ENCODE measurements at regions of chr1 and their contacts with region 1.

Region 1: DNA sequence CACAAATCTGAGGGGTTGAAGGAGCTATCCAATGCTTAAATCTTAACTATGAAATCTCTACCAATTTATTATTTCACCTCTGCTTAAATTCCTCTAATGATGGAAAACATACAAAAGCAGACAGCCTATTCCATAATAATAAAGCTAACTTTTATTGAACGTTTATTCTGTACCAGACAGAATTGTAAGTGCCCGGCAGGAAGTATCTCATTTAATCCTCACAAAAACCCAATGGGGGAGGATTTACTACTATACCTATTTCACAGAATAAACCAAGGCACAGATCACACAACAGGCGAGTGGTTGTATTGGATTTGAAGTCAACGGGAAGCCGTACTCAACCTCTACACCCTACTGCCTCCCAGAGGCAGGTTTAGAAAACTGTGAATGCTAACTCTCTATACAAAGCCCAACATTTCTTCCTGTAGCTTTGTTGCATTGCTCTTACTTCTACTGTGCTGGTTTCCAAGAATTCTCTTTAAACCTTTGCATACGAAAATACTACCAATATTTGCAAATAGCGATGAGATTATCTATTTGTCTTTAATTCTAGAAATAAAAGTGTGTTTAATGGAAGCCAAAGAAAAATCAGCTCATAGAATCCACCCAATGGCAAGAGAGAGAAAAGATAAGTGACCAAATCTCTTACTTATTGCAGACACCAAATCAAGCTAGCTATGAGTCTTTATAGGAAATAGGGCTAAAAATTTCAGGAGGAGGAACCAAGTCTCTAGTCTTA is 33.5 kb upstream of the C1orf53 start:
- DNase-seq: peak; percentile 45
- ATAC-seq: peak; percentile 93
- H3K4me3 ChIP-seq: no peak overlapping the region
- H3K27ac ChIP-seq: no peak overlapping the region
- H3K4me1 ChIP-seq: no peaks in the 10 kb centered on the region
- H3K27me3 ChIP-seq: no peaks in the 10 kb centered on the region; the same call in 1 of the 2 replicates
- CTCF ChIP-seq: peak; percentile 74

Region 2: DNA sequence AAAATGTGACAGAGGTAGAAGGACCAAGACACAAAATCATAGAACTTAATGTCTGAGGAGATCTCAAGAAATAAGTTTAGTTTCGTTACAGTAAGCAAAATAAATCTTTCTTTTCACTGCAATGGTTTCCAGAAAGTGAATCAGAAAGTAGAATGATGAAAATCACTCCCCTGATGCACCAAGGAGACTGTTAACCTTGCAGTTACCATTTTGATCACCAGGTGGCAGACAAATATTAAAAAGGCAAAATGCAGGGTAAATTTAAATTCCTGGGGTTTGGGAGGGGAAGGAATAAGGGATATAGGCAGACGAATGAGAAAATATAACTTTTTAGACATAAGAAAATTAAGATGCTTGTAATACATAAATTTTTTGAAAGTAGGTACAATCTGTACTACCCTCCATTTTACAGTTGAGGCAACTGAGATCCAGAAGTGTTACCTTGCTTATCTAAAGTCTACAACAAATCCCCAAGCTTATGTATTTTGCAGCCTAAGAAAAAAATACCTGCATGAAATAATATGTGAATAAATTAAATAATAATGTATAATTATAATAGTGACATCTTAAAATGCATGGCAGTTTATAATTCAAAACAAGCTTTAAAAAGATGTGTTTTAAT is 347.7 kb before region 1 on chr1:
- CTCF ChIA-PET with region 1: no interaction called
- POLR2A ChIA-PET with region 1: no interaction called
- in situ Hi-C with region 1: no loop called
- intact Hi-C with region 1: loop called (anchors 5 kb)
- DNase-seq: no peak
- ATAC-seq: no peak; the same call in 1 of the 2 replicates
- H3K4me3 ChIP-seq: no peak overlapping the region
- H3K27ac ChIP-seq: no peak overlapping the region
- H3K4me1 ChIP-seq: no peaks in the 10 kb centered on the region
- H3K27me3 ChIP-seq: no peaks in the 10 kb centered on the region
- CTCF ChIP-seq: peak; percentile 70; the same call in 1 of the 2 replicates

Region 3: DNA sequence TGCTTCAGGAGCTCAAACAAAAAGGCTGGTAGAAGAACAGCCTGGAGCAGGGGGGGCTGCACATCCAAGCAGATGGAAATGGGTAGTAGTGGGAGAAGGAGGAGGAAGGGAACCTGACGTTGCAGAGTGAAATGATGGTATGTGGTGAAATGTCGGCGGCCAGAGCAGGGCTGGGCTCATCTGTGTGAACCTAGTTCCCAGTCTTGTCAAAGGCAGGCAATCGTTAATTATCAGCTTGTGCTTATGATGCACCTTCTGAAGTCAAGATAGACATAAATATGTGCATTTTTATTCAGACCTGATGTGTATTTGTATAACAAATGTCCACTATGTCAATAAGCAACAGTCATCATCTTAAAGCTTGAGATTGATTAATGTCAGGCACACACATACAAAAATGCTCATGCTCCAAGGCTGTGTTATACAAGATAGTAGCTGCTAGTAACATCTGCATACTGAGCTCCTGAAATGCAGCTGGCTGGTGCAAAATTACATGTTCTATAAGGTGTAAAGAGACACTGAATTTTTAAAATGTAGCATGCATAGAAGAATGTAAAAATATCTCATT is 682.1 kb after region 1 on chr1:
- CTCF ChIA-PET with region 1: no interaction called
- POLR2A ChIA-PET with region 1: interaction called, 15 read pairs
- in situ Hi-C with region 1: no loop called
- intact Hi-C with region 1: no loop called
- DNase-seq: no peak
- ATAC-seq: no peak
- H3K4me3 ChIP-seq: no peak overlapping the region
- H3K27ac ChIP-seq: no peak overlapping the region
- H3K4me1 ChIP-seq: no peaks in the 10 kb centered on the region
- H3K27me3 ChIP-seq: no peaks in the 10 kb centered on the region
- CTCF ChIP-seq: no peak